ENCODE measurements at regions of chr15 and their contacts with region 1.

Region 1: GRCh38 chr15:99104788-99105513 is at the start of gene SYNM:
- DNase-seq: no peak
- H3K4me3 ChIP-seq: peak within 1 kb of the TSS; percentile 62
- H3K27ac ChIP-seq: no peak within 1 kb of the TSS
- H3K27me3 ChIP-seq: peaks cover 7% of the 10 kb centered on the region
- CTCF ChIP-seq: peak; percentile 42
- polyA plus RNA-seq, gene SYNM: 3.2 and 3.6 TPM in 2 replicates

Region 2: DNA sequence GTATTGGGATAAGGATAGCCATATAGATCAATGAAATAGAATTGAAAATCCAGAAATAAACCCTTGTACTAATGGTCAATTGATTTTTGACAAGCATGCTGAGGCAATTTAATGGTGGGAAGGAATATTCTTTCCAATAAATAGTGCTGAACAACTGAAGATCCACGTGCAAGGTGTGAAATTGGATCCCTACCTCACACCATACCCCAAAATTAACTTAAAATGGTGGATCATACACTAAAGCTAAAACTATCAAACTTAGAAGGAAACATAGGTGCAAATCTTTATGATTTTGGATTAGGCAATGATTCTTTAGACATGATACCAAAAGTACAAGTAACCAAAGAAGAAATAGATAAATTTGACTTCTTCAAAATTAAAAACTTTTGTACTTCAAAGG is 22.2 kb before region 1 on chr15:
- CTCF ChIA-PET with region 1: interaction called, 21 read pairs
- POLR2A ChIA-PET with region 1: no interaction called
- DNase-seq: no peak
- H3K4me3 ChIP-seq: no peak overlapping the region
- H3K27ac ChIP-seq: no peak overlapping the region
- H3K27me3 ChIP-seq: peaks cover 5% of the 10 kb centered on the region
- CTCF ChIP-seq: no peak

Region 3: GRCh38 chr15:99123706-99124451 is 18.9 kb after region 1 on chr15:
- CTCF ChIA-PET with region 1: interaction called, 16 read pairs
- POLR2A ChIA-PET with region 1: interaction called, 7 read pairs
- DNase-seq: peak; percentile 83
- H3K4me3 ChIP-seq: peak overlapping the region; percentile 36
- H3K27ac ChIP-seq: peak overlapping the region; percentile 91
- H3K27me3 ChIP-seq: no peaks in the 10 kb centered on the region
- CTCF ChIP-seq: peak; percentile 4; the same call in 1 of the 2 replicates

Region 4: DNA sequence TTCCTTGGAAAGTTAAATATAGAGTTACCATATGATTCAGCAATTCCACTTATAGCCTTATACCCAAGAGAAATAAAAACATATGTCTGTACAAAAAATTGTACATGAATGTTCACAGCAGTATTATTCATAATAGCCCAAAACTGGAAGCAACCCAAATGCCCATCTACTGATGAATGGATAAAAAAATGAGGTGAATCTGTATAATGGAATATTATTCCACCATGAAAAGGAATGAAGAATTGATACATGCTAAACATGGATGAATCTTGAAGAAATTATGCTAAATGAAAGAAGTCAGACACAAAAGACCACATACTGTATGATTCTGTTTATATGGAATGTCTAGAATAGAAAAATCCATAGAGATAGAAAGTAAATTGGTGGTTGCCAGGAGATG is 83.0 kb after region 1 on chr15:
- CTCF ChIA-PET with region 1: interaction called, 11 read pairs
- POLR2A ChIA-PET with region 1: no interaction called
- DNase-seq: no peak
- H3K4me3 ChIP-seq: no peak overlapping the region
- H3K27ac ChIP-seq: no peak overlapping the region
- H3K27me3 ChIP-seq: no peaks in the 10 kb centered on the region
- CTCF ChIP-seq: no peak

Region 5: DNA sequence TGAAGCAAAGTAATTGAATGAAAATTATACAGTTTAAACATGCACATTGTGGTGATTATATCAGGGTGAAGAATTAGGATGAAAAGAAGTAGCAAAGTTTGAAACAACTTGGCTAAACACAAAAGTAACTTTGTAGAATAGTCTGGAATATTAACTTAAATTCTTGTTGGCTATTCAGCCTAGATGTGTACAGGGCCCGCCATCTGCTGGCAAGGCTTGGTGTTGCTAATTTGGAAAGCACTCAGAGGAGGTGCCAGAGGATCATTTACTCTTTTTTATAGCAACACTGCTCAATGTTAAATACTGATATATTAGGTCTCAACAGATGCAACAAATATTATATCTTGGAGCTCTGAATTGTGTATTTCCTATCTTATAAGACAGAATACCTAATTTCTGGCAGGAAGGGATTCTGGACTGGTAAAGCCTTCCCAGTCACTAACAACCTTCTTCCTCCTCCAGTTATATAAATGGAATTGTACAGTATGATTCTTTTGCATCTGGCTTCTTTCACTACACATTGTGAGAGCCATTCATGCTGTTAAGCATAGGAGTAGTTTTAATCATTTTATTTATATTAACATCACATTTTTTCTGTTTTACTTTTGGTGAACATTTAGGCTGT is 108.3 kb after region 1 on chr15:
- CTCF ChIA-PET with region 1: interaction called, 198 read pairs
- POLR2A ChIA-PET with region 1: interaction called, 4 read pairs
- DNase-seq: peak; percentile 27
- H3K4me3 ChIP-seq: no peak overlapping the region
- H3K27ac ChIP-seq: no peak overlapping the region
- H3K27me3 ChIP-seq: no peaks in the 10 kb centered on the region
- CTCF ChIP-seq: peak; percentile 96